ENCODE measurements at regions of chr2 and their contacts with region 1.

Region 1: DNA sequence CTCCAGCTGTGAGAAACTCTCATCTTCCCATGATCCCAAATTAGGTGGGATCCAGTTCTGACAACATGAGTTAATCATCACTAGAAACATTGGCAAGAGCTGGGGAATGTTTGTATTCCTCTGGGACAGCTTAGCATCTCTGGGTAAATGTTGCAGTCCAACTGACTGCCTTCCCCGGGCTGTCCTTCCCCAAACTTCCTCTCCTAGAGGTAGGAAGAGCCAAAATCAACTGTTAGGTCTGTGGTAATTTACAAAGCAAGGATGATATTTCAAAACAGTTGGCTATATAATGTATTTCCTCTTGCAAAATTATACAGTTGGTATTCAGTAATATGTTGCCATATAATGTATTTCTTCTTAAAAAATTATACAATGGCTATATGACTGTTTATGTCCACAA is 148.5 kb downstream of the MGAT5 start:
- DNase-seq: peak in 3 of 7 donors; percentile 10 to 45 (median 18)
- H3K4me3 ChIP-seq: no peak overlapping the region
- H3K27ac ChIP-seq: no peak overlapping the region
- H3K4me1 ChIP-seq: peaks cover 0 to 13% of the 10 kb centered on the region in 2 donors
- H3K27me3 ChIP-seq: no peaks in the 10 kb centered on the region
- CTCF ChIP-seq: no peak
- POLR2A ChIP-seq: no peak

Region 2: GRCh38 chr2:134258684-134259388 is 143.6 kb before region 1 on chr2:
- intact Hi-C with region 1: loop called in 1 of 2 experiments (anchors 10 kb)
- DNase-seq: no peak
- H3K4me3 ChIP-seq: no peak overlapping the region
- H3K27ac ChIP-seq: no peak overlapping the region
- H3K4me1 ChIP-seq: peaks cover 0 to 35% of the 10 kb centered on the region in 2 donors
- H3K27me3 ChIP-seq: no peaks in the 10 kb centered on the region
- CTCF ChIP-seq: no peak
- POLR2A ChIP-seq: no peak

Measured in adrenal gland (tissue), 19 donors.